Transverse colon (tissue), 4 donors: ENCODE measurements at regions of chr11 and their contacts with region 1.

Region 1: DNA sequence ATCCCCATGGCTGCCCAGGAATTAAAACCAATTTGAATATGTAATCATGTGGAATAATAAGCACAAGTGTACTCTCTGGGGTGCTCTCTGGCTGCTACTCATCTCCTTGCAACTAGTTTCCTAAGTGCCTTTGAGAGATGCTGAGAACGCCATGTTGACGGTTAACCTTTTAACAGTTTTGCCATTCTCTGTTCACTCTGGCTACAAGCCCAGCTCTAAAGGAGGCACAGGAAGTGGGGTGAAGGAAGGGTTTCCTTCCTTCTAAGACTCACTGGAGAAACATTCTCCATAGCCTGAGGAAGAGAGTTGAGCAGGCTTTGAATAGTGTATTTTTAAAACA is 122.0 kb upstream of the ZC3H12C start:
- DNase-seq: no peak
- H3K4me3 ChIP-seq: no peak overlapping the region
- H3K27ac ChIP-seq: no peak overlapping the region
- H3K4me1 ChIP-seq: no peaks in the 10 kb centered on the region
- H3K27me3 ChIP-seq: no peaks in the 10 kb centered on the region
- CTCF ChIP-seq: no peak
- EP300 ChIP-seq: no peak
- POLR2A ChIP-seq: no peak

Region 2: GRCh38 chr11:110026858-110027626 is 55.9 kb after region 1 on chr11:
- in situ Hi-C with region 1: no loop called
- intact Hi-C with region 1: no loop called
- DNase-seq: no peak
- H3K4me3 ChIP-seq: no peak overlapping the region
- H3K27ac ChIP-seq: no peak overlapping the region
- H3K4me1 ChIP-seq: no peaks in the 10 kb centered on the region
- H3K27me3 ChIP-seq: no peaks in the 10 kb centered on the region
- CTCF ChIP-seq: no peak
- EP300 ChIP-seq: no peak
- POLR2A ChIP-seq: no peak

Region 3: DNA sequence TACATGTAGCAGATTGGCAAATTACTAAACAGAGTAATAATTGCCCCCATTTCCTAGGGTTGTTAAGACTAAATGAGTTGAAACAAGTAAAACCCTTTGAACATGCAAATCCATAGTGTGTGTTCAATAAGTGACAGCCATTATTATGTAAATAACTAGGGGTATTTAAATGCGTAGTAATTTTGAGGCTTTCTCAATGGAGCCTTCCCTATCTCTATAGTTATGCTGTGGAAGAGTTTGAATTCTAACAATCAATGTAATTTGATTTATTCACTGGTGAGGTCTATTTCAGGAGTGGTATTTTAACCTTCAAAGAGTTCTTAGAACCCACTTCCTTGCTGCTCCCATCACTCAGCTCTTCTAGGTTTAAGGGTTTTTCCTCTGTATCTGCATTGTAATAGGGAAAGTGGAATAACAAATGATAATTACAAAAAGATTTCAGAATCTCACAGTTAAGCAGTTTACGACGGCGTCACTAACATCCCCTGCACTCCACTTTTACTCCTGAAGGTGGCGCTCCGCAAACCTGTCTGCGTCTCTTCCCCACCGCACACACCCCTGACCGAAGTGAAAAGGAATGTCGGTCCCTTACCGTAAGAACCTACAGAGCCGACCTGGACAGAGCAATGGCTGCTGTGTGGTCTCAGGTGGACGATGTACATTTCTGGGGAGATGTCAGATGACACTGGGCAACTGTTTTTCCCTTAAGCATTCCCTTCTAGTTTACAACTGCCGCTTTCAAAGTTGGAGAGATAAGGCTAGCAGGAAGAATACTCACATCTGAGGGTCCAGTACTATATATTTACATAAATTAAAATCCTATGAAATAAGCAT is 202.9 kb after region 1 on chr11:
- in situ Hi-C with region 1: loop called in 1 of 4 experiments (anchors 25 kb)
- intact Hi-C with region 1: no loop called
- DNase-seq: peak; percentile 79
- H3K4me3 ChIP-seq: peak overlapping the region in 1 of 4 donors; percentile 3
- H3K27ac ChIP-seq: no peak overlapping the region
- H3K4me1 ChIP-seq: peaks cover 0 to 12% (median 2%) of the 10 kb centered on the region in 4 donors
- H3K27me3 ChIP-seq: no peaks in the 10 kb centered on the region
- CTCF ChIP-seq: peak; percentile 58 to 73 (median 72)
- EP300 ChIP-seq: no peak
- POLR2A ChIP-seq: no peak

Region 4: DNA sequence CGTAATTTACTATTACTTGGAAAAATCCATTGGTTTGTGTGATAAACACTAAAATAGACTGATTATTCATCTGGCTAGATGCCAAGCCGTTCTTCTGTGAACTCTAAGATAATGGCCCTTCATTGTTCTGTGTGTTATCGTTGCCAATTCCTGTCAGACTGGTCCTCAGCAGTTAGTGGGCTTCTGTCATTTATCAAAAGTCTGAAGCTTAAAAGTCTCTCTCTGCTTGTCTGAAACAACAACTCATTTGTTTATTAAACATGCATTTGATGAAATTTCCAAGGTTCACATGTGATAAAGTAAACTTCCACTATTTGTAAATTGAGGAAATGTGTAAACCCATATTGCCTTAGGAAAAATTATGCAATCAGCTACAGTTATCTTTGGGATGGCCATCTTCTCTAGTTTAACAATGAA is 346.4 kb after region 1 on chr11:
- in situ Hi-C with region 1: no loop called
- intact Hi-C with region 1: no loop called
- DNase-seq: no peak
- H3K4me3 ChIP-seq: no peak overlapping the region
- H3K27ac ChIP-seq: no peak overlapping the region
- H3K4me1 ChIP-seq: no peaks in the 10 kb centered on the region
- H3K27me3 ChIP-seq: peaks cover 40% of the 10 kb centered on the region
- CTCF ChIP-seq: no peak
- EP300 ChIP-seq: no peak
- POLR2A ChIP-seq: no peak